Left cardiac atrium (tissue), 4 donors: ENCODE measurements at regions of chr6 and their contacts with region 1.

Region 1: GRCh38 chr6:6890400-6890858 is 217.3 kb upstream of the RREB1 start:
- DNase-seq: peak; percentile 59
- ATAC-seq: peak; percentile 64 to 72

Region 2: GRCh38 chr6:6584310-6585002 is 306.0 kb before region 1 on chr6:
- intact Hi-C with region 1: no loop called
- DNase-seq: no peak
- ATAC-seq: no peak

Region 3: GRCh38 chr6:6736791-6737654 is 153.4 kb before region 1 on chr6:
- intact Hi-C with region 1: loop called in 1 of 2 experiments (anchors 5 kb)
- DNase-seq: peak; percentile 88
- ATAC-seq: peak; percentile 84 to 88

Region 4: DNA sequence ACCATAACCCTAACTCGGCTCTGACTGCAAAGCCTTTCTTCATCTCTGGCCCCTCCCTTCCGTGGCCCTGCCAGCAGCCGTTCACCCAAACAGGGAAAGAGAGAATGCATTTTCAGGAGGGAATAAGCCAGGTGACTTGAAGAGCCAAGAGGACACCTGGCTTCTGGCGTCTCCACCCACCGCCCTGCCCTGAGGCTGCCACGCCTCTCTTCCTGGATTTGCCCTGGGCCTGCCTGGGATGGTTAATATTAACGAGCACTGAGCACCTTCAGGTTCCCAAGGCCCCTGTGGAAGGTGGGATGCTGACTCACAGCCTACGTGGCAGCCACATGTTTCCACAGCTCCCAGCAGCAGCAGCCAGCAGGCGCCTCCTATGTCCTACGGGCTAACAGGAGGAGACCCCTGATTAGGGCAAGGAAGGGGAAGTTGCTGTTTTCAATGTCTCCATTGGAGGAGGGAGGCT is 79.4 kb after region 1 on chr6:
- intact Hi-C with region 1: loop called in 1 of 2 experiments (anchors 10 kb)
- DNase-seq: no peak
- ATAC-seq: no peak

Region 5: GRCh38 chr6:7224731-7225130 is 334.3 kb after region 1 on chr6:
- intact Hi-C with region 1: loop called in 1 of 2 experiments (anchors 10 kb)
- DNase-seq: peak; percentile 57
- ATAC-seq: peak in 1 of 2 donors; percentile 51